ENCODE measurements at regions of chr9 and their contacts with region 1.

Region 1: DNA sequence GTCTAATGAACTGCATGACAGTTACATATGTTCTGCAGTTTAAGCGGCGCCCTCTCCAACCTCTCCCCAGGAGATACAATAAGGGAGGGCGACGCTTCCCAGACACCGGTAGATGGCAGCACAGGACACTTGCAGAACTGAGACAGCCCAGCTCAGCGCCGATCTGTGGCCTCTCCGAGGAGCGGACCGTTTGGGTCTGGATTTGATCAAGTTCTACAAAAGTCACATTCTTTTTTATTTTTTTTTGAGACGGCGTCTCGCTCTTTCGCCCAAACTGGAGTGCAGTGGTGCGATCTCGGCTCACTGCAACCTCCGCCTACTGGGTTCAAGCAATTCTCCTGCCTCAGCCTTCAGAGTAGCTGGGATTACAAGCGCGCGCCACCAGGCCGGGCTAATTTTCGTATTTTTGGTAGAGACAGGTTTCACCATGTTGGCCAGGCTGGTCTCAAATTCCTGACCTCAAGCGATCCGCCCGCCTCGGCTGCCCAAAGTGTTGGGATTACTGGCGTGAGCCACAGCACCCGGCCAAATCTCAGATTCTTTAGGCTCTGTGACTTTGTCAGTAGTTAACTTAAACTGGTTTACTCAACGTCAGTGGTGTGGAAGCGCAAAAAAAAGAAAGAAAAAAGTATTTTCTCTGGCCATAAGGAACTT is 1.4 kb upstream of the ATOSB start:
- DNase-seq: peak; percentile 87 to 91 (median 89)
- H3K4me3 ChIP-seq: peak overlapping the region; percentile 52 to 91 (median 72)
- H3K4me3 Mint-ChIP-seq: peak overlapping the region; percentile 97 to 99
- H3K27ac ChIP-seq: peak overlapping the region in 1 of 2 donors; percentile 98
- H3K27ac Mint-ChIP-seq: peak overlapping the region; percentile 99 to 100 (median 99)
- H3K4me1 ChIP-seq: peaks cover 35 to 45% of the 10 kb centered on the region in 2 donors
- H3K4me1 Mint-ChIP-seq: peaks cover 42% of the 10 kb centered on the region
- H3K27me3 ChIP-seq: no peaks in the 10 kb centered on the region
- H3K27me3 Mint-ChIP-seq: peaks cover 0 to 3% (median 3%) of the 10 kb centered on the region in 3 donors
- CTCF ChIP-seq: peak; percentile 92

Region 2: DNA sequence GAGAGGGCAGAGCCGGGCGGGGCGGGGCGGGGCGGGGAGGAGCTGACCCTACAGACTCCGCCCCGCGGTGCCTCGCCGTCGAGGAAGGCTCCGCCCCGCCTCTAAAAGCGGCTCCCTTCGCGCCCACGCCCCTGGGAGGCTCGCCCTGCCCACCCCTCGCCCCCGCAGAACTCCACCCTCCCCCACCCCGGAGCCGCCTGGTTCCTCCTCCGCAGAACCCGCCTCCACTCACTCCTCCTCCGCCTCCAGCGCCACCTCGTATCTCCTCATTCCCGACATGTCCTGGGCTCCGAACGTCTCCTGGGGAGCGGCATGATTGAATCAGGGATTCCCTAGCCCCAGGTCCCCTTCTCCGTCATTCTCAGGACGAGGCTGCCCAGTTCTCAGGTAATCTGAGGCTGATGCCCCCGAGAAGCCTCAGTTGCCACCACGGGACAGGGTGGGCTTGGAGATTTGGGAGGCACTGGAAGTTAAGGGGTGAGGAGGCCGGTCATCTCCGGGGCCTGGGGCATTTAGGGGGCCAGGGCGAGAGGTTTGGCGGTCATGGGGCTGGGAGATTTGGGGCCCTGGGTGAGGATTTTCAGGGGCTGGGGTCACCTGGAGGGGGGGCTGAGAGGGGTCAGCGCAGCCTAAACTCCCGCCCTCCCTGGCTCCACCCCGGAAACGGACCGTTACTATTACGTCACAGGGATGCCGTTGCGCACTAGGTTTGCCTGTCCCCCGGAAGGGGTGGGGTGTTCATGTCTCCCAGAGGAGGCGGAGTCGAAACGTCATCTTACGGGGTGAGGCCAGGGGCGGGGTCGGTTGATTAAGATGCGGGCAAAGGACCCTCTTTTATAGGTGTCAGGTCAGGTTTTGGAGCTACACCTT is 451.4 kb before region 1 on chr9:
- intact Hi-C with region 1: loop called in 1 of 2 experiments (anchors 10 kb)
- DNase-seq: peak; percentile 94 to 95 (median 94)
- H3K4me3 ChIP-seq: peak overlapping the region; percentile 65 to 87 (median 71)
- H3K4me3 Mint-ChIP-seq: peak overlapping the region; percentile 82 to 91
- H3K27ac ChIP-seq: peak overlapping the region; percentile 95 to 98
- H3K27ac Mint-ChIP-seq: peak overlapping the region; percentile 97 to 99 (median 99)
- H3K4me1 ChIP-seq: peaks cover 16 to 19% of the 10 kb centered on the region in 2 donors
- H3K4me1 Mint-ChIP-seq: peaks cover 26% of the 10 kb centered on the region
- H3K27me3 ChIP-seq: no peaks in the 10 kb centered on the region
- H3K27me3 Mint-ChIP-seq: peaks cover 0 to 3% (median 2%) of the 10 kb centered on the region in 3 donors
- CTCF ChIP-seq: no peak

Region 3: DNA sequence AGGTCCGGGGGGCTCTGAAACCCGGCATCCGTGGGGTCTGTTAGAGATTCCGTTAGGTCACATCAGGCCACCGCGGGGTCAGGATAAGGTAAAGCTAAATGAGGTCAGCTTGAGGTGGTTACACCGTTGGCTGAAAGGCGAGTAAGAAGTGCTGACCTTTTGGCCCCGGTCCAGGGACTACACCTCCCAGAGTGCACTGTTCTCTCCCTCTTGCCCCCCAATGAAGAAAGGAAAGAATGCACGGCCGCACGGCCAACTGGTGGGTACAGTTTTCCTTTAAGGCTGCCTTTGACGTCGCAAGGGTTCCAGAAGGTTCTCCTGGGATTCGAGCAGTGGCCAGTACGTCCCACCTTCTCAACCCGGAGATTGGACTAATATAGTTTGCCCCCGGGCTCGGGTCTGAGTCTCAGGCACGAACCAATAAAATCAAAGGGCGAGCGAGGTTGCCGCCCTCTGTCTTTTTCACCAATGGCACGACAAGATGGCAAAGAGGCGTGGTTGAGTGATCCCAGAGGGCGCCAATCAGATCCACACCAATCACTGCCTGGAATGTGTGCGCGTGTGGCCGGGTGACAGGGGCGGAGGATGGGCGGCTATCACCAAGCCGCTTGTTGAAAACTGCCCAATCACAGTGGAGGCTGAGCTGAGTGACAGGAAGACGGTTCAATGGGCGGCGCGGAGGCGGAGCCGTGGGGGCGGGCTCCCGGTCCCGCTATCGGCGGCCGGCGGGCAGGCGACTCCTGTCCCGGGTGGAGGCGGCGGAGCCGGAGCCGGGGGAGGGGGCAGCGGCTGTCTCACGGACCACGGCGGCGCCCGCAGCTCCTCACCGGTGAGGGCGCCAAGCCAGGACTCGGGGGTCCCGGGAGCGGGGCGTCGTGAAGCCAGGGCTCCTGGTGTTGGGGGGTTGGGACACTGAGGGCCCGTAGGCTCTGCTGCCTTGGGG is 127.8 kb before region 1 on chr9 and contains the start of gene DNAJB5:
- intact Hi-C with region 1: loop called in 1 of 2 experiments (anchors 2 kb)
- DNase-seq: peak; percentile 99
- H3K4me3 ChIP-seq: peak within 1 kb of the TSS; percentile 71 to 86 (median 80)
- H3K4me3 Mint-ChIP-seq: peak within 1 kb of the TSS; percentile 92 to 96
- H3K27ac ChIP-seq: peak within 1 kb of the TSS; percentile 11 to 83
- H3K27ac Mint-ChIP-seq: peak within 1 kb of the TSS; percentile 79 to 97 (median 95)
- H3K4me1 ChIP-seq: peaks cover 45 to 60% of the 10 kb centered on the region in 2 donors
- H3K4me1 Mint-ChIP-seq: peaks cover 67% of the 10 kb centered on the region
- H3K27me3 ChIP-seq: peaks cover 0 to 10% of the 10 kb centered on the region in 2 donors
- H3K27me3 Mint-ChIP-seq: peaks cover 8 to 28% (median 24%) of the 10 kb centered on the region in 3 donors
- CTCF ChIP-seq: no peak
- polyA plus RNA-seq, gene DNAJB5: 0.66 to 1.9 (median 0.84) TPM

Region 4: DNA sequence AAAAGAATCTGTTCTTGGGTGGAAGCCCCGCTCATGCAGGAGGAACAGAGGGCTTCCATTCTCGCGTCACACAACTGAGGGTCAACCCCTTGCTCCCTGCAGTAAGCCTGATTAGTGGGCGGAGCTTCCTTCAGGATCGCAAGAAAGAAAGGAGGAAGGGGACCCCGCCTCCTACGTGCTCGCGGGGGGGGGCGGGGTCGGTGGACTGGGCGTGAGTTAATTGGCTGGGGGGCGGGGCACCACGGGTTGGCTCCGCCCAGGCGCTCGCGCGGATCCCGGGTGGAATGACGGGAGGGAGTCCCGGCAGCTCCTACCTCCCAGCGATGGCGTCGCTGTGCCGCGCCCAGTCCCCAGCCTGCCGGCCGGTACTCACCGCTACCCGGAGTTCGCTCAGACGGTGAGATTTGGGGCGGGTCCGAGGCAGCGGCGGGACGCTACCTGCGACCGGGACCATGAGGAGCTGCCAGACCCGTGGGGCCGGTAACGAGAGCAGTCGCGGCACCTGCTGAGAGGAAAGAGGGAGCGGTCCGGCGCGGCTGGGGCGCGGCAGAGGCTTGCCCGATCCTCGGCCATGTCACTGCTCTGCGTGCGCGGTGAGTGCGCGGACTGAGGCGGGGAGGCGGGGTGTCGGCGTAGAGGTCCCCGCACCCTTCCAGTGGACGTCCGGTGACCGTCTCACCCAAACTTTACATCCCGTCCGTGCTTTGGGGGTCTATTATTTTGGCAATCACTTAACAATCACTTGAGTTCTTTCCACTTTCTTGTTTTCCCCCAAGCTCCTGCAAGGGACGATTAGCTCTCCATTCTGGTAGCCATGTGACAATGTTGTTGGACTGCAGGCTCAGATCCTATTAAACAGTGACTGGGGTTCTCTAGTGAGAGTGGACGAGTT is 44.9 kb after region 1 on chr9 and contains the start of gene UNC13B:
- intact Hi-C with region 1: loop called in 1 of 2 experiments (anchors 5 kb)
- DNase-seq: peak; percentile 77 to 83 (median 83)
- H3K4me3 ChIP-seq: peak within 1 kb of the TSS; percentile 79 to 89 (median 81)
- H3K4me3 Mint-ChIP-seq: peak within 1 kb of the TSS; percentile 88 to 93
- H3K27ac ChIP-seq: peak within 1 kb of the TSS in 1 of 2 donors; percentile 55
- H3K27ac Mint-ChIP-seq: peak within 1 kb of the TSS in 4 of 7 donors; percentile 26 to 73 (median 38)
- H3K4me1 ChIP-seq: peaks cover 15 to 22% of the 10 kb centered on the region in 2 donors
- H3K4me1 Mint-ChIP-seq: peaks cover 25% of the 10 kb centered on the region
- H3K27me3 ChIP-seq: peaks cover 7 to 12% of the 10 kb centered on the region in 2 donors
- H3K27me3 Mint-ChIP-seq: peaks cover 8 to 13% (median 12%) of the 10 kb centered on the region in 3 donors
- CTCF ChIP-seq: no peak
- polyA plus RNA-seq, gene UNC13B: 0.41 to 0.81 (median 0.66) TPM

Region 5: DNA sequence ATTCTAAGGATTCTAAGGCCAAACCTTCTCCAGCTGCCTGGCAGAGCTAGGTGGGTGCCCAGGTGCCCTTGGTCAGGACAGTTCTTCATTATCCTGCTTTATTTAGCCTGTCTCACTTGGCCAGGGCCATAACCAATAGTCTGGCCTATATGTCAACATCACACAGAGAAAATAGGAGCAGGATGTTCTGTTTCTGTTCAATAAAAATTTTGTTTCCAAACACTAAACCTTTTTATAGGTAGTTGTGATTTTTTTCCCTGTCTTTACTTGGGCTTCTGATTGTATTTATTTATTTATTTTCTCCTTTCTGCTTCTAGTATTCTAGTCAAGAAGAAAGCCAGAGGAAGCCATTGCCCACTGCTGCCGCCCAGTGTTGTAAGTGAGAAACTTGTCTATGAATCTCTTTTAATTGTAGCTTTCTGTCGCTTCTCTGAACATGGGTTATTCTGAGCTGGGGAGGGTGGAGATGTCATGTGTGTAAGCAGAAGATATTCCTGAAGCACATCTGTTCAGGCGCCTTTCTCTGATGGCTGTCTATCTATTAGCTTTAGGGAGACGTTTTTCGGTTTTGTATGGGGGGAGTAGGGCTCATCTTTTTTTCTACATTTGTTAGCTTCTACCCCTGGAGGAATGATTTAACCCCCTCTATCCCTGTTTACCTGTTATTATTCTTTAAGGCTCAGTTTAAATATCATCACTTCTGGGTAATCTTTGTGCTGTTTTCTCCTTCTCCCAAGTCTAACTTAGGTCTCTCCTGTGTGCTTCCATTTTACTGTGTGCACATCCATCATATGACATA is 141.8 kb after region 1 on chr9:
- intact Hi-C with region 1: loop called (anchors 10 kb)
- DNase-seq: peak; percentile 17 to 48 (median 31)
- H3K4me3 ChIP-seq: no peak overlapping the region
- H3K4me3 Mint-ChIP-seq: no peak overlapping the region
- H3K27ac ChIP-seq: no peak overlapping the region
- H3K27ac Mint-ChIP-seq: no peak overlapping the region
- H3K4me1 ChIP-seq: peaks cover 2 to 10% of the 10 kb centered on the region in 2 donors
- H3K4me1 Mint-ChIP-seq: peaks cover 14% of the 10 kb centered on the region
- H3K27me3 ChIP-seq: no peaks in the 10 kb centered on the region
- H3K27me3 Mint-ChIP-seq: no peaks in the 10 kb centered on the region
- CTCF ChIP-seq: peak; percentile 75

Region 6: DNA sequence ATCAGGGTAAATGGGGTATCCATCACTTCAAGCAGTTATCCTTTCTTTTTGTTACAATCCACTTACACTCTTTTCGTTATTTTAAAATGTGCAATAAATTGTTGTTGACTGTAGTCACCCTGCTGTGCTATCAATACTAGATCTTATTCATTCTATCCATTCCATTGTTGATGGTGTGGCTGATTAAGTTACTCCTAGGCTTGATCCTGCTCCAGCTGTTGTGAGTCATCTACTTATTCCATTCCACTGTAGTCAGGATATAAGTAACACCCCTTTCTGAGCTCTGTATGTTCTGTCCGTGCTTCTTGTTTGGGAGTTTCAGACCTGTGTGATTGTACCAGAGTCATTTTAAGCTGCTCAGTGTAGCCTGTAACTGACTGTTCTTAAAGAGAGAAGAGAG is 250.4 kb after region 1 on chr9:
- intact Hi-C with region 1: no loop called
- DNase-seq: no peak
- H3K4me3 ChIP-seq: no peak overlapping the region
- H3K4me3 Mint-ChIP-seq: no peak overlapping the region
- H3K27ac ChIP-seq: no peak overlapping the region
- H3K27ac Mint-ChIP-seq: peak overlapping the region in 1 of 7 donors; percentile 8
- H3K4me1 ChIP-seq: no peaks in the 10 kb centered on the region
- H3K4me1 Mint-ChIP-seq: no peaks in the 10 kb centered on the region
- H3K27me3 ChIP-seq: no peaks in the 10 kb centered on the region
- H3K27me3 Mint-ChIP-seq: no peaks in the 10 kb centered on the region
- CTCF ChIP-seq: no peak

Region 7: GRCh38 chr9:35481347-35481975 is 364.4 kb after region 1 on chr9:
- intact Hi-C with region 1: loop called (anchors 5 kb)
- DNase-seq: peak; percentile 38 to 54 (median 40)
- H3K4me3 ChIP-seq: no peak overlapping the region
- H3K4me3 Mint-ChIP-seq: no peak overlapping the region
- H3K27ac ChIP-seq: no peak overlapping the region
- H3K27ac Mint-ChIP-seq: peak overlapping the region in 2 of 7 donors; percentile 42 to 61
- H3K4me1 ChIP-seq: no peaks in the 10 kb centered on the region
- H3K4me1 Mint-ChIP-seq: no peaks in the 10 kb centered on the region
- H3K27me3 ChIP-seq: peaks cover 0 to 3% of the 10 kb centered on the region in 2 donors
- H3K27me3 Mint-ChIP-seq: peaks cover 0 to 6% (median 2%) of the 10 kb centered on the region in 3 donors
- CTCF ChIP-seq: peak; percentile 77

Region 8: GRCh38 chr9:35553670-35554543 is 436.9 kb after region 1 on chr9:
- intact Hi-C with region 1: loop called (anchors 5 to 10 kb)
- DNase-seq: peak; percentile 81 to 90 (median 81)
- H3K4me3 ChIP-seq: peak overlapping the region in 1 of 3 experiments; percentile 27
- H3K4me3 Mint-ChIP-seq: no peak overlapping the region
- H3K27ac ChIP-seq: peak overlapping the region; percentile 41 to 76
- H3K27ac Mint-ChIP-seq: no peak overlapping the region
- H3K4me1 ChIP-seq: peaks cover 11 to 13% of the 10 kb centered on the region in 2 donors
- H3K4me1 Mint-ChIP-seq: peaks cover 3% of the 10 kb centered on the region
- H3K27me3 ChIP-seq: no peaks in the 10 kb centered on the region
- H3K27me3 Mint-ChIP-seq: peaks cover 0 to 2% (median 0%) of the 10 kb centered on the region in 3 donors
- CTCF ChIP-seq: peak; percentile 93